Activated T-helper 2 cell treated with anti-CD3 and anti-CD28 coated beads, Interferon-gamma antibody, Interleukin-2, Interleukin-4, amounts not matched to agents 10 μg/mL and 5 μg/mL and 100 μg/mL, durations not matched to agents 14 hours and 24 hours and 36 hours (primary cell): ENCODE measurements at regions of chr17 and their contacts with region 1.

Region 1: GRCh38 chr17:2266045-2266864 is 37.3 kb downstream of the SMG6 start:
- DNase-seq: peak; percentile 89
- H3K4me3 Mint-ChIP-seq: peak overlapping the region; percentile 83
- H3K27ac Mint-ChIP-seq: peak overlapping the region; percentile 100
- H3K4me1 Mint-ChIP-seq: peaks cover 77% of the 10 kb centered on the region
- H3K27me3 Mint-ChIP-seq: no peaks in the 10 kb centered on the region

Region 2: GRCh38 chr17:2222901-2223616 is 43.2 kb before region 1 on chr17:
- intact Hi-C with region 1: no loop called
- DNase-seq: no peak
- H3K4me3 Mint-ChIP-seq: no peak overlapping the region
- H3K27ac Mint-ChIP-seq: peak overlapping the region; percentile 61
- H3K4me1 Mint-ChIP-seq: peaks cover 42% of the 10 kb centered on the region
- H3K27me3 Mint-ChIP-seq: no peaks in the 10 kb centered on the region

Region 3: DNA sequence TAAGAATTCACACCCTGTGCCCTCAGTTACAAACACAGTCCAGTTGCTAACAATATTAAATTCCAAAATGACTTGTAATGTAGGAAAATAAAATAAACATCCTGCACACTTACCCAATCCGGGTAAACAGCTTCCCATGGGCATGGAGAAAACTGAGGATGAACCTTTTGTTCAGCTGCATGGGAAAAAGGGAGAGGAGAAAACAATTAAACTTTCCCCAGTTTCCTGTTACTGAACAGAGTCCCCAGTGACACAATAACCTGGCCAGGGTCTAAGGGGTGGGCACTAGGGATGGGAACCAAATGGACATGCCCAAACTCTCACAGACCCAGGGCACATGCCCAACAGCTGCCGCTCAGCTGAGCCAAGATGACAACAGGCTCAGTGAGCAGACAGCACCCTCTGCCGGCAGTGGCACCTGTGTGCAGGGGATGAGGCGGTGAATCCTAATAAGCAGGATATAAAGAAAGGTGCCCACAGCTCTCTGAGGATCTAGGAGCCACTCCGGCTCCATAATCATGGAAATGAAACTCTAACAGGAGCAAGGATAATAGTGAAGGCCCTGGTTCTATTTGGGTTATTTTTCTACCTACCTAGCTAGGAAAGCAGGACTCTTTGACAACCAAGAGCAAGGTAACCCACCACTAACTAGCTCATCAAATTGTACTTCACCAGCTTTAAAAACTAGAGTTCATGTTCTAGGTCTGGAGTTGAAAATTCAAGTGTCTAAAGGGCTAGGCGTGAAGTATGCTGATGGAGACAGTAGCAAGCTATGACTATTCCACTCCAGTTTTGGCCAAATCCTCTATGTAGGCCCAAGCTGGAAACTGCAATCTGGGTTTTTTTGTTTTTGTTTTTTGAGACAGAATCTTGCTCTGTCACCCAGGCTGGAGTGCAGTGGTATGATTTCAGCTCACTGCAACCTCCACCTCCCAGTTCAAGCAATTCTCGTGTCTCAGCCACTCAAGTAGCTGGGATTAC is 21.4 kb before region 1 on chr17:
- intact Hi-C with region 1: loop called (anchors 1 kb)
- DNase-seq: peak; percentile 72
- H3K4me3 Mint-ChIP-seq: no peak overlapping the region
- H3K27ac Mint-ChIP-seq: peak overlapping the region; percentile 50
- H3K4me1 Mint-ChIP-seq: peaks cover 70% of the 10 kb centered on the region
- H3K27me3 Mint-ChIP-seq: no peaks in the 10 kb centered on the region

Region 4: DNA sequence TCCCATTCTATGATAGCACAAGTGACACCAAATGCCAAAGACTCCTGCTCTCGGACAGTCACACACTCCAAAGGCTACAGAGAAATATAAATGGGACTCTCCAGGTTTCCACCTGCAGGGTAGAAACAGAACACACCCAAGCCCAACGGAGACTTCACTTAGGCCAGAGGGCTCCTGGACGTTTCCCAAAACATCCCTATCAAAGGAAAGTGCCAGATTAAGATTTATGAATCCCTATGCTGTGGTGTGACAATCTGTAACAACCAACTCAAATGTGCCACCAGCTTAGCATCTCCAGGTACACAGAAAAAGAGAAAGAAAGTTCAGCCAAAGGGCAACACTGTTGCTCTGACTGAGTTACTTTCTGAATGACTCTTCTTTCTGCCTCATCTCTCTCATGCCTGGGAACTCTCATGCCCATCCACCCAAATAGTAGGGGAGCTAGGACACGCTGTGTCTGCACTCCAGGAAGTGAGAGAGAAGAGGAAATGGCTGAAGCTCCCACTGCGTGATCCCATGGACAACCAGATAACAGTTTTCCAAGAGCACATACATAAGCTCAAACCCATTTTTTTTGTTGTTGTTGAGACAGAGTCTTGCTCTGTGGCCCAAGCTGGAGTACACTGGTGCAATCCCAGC is 12.4 kb before region 1 on chr17:
- intact Hi-C with region 1: loop called (anchors 1 kb)
- DNase-seq: peak; percentile 56
- H3K4me3 Mint-ChIP-seq: peak overlapping the region; percentile 18
- H3K27ac Mint-ChIP-seq: peak overlapping the region; percentile 92
- H3K4me1 Mint-ChIP-seq: peaks cover 61% of the 10 kb centered on the region
- H3K27me3 Mint-ChIP-seq: no peaks in the 10 kb centered on the region

Region 5: DNA sequence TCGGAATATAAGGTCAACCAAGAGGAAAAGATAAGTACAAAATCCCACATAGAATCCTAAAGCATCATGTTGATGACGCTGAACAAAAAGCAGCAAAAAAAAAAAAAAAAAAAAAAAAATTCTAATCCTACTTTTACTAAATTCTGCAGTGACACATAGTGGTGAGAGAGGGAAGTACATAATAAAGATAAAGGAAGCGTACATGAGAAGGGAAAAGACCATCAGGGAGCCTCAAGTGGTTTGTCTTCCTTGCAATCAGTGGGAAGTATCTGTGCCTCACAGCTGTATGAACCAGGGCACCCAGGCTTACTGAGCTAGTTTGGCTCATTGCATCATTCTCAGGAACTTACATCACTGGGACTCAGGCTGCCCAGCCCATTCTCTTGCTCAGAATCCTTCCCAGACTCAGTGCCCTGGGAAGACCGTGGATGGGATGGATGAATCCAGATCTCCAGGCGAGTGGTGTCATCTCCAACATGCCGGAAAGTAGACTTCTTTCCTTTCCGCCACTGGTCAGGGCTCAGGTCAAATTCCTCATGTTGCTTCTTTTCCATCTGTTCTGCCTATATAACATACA is 16.1 kb after region 1 on chr17:
- intact Hi-C with region 1: loop called (anchors 1 kb)
- DNase-seq: no peak
- H3K4me3 Mint-ChIP-seq: no peak overlapping the region
- H3K27ac Mint-ChIP-seq: peak overlapping the region; percentile 65
- H3K4me1 Mint-ChIP-seq: peaks cover 45% of the 10 kb centered on the region
- H3K27me3 Mint-ChIP-seq: no peaks in the 10 kb centered on the region

Region 6: DNA sequence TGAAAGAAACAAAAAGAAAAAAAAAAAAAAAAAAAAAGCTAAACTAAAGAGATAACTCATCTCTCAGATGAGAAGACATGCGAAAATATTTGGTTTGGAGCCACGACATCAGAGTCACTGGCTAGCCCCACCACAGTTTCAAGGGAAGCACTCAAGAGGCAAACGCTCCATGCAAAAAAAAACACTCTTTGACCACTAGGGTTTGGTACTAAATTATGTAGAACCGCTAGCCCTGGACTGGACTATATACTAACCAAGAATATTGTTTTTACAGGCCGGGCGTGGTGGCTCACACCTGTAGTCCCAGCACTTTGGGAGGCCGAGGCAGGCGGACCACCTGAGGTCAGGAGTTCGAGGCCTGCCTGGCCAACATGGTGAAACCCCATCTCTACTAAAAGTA is 208.1 kb after region 1 on chr17:
- intact Hi-C with region 1: no loop called
- DNase-seq: no peak
- H3K4me3 Mint-ChIP-seq: no peak overlapping the region
- H3K27ac Mint-ChIP-seq: no peak overlapping the region
- H3K4me1 Mint-ChIP-seq: no peaks in the 10 kb centered on the region
- H3K27me3 Mint-ChIP-seq: no peaks in the 10 kb centered on the region